Activated naive CD4-positive, alpha-beta T cell treated with anti-CD3 and anti-CD28 coated beads for 36 hours (primary cell): ENCODE measurements at regions of chr4 and their contacts with region 1.

Region 1: DNA sequence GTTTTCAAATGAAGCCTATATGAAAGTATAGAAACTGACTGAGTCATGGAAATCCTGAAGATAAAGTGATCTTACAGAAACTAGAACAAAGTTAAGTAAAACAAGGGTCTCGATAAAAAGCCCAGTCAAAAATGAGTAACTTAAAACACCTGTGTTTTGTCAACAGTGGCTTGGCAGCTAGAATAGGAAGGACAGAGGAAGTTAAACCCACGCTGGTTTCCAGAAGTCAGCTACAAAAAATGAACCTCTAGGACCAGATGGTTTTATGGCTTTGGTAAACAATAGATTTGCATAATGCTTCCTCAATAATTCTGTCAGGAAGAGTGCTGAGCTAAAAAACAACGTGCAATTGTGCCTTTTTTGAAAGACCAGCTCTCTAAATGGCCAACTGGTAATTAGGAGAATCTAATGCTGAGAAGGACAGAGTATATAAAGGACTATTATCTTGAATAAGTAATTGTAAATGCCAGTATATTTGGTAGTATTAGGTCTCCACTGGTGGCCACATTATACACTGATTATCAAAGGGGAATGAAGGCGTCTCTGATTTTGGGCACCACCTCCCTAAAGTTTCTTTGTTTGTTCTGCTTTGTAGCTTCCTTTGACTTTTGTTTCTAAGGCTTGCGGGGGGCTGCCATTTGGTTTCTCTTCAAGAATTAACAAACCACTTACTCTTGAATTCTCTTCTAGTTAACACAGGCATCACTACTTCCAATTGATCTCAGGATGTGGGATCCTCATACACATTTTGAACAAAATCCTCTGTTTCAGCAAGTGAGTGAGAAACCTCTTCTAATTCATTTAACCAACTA is 72.2 kb upstream of the PPP3CA start:
- DNase-seq: no peak
- H3K4me3 Mint-ChIP-seq: no peak overlapping the region
- H3K27ac Mint-ChIP-seq: no peak overlapping the region
- H3K4me1 Mint-ChIP-seq: peaks cover 36% of the 10 kb centered on the region
- H3K27me3 Mint-ChIP-seq: peaks cover 43% of the 10 kb centered on the region

Region 2: GRCh38 chr4:101103381-101104142 is 316.0 kb before region 1 on chr4:
- CTCF ChIA-PET with region 1: no interaction called
- intact Hi-C with region 1: no loop called
- DNase-seq: no peak
- H3K4me3 Mint-ChIP-seq: no peak overlapping the region
- H3K27ac Mint-ChIP-seq: no peak overlapping the region
- H3K4me1 Mint-ChIP-seq: peaks cover 21% of the 10 kb centered on the region
- H3K27me3 Mint-ChIP-seq: no peaks in the 10 kb centered on the region

Region 3: GRCh38 chr4:101205916-101206315 is 213.6 kb before region 1 on chr4:
- CTCF ChIA-PET with region 1: no interaction called
- intact Hi-C with region 1: loop called (anchors 2 kb)
- DNase-seq: peak; percentile 60
- H3K4me3 Mint-ChIP-seq: no peak overlapping the region
- H3K27ac Mint-ChIP-seq: no peak overlapping the region
- H3K4me1 Mint-ChIP-seq: peaks cover 24% of the 10 kb centered on the region
- H3K27me3 Mint-ChIP-seq: no peaks in the 10 kb centered on the region

Region 4: GRCh38 chr4:101334963-101335572 is 84.5 kb before region 1 on chr4:
- CTCF ChIA-PET with region 1: no interaction called
- intact Hi-C with region 1: no loop called
- DNase-seq: no peak
- H3K4me3 Mint-ChIP-seq: no peak overlapping the region
- H3K27ac Mint-ChIP-seq: no peak overlapping the region
- H3K4me1 Mint-ChIP-seq: peaks cover 22% of the 10 kb centered on the region
- H3K27me3 Mint-ChIP-seq: peaks cover 4% of the 10 kb centered on the region

Region 5: GRCh38 chr4:101458914-101459313 is 39.4 kb after region 1 on chr4:
- CTCF ChIA-PET with region 1: no interaction called
- intact Hi-C with region 1: no loop called
- DNase-seq: no peak
- H3K4me3 Mint-ChIP-seq: no peak overlapping the region
- H3K27ac Mint-ChIP-seq: no peak overlapping the region
- H3K4me1 Mint-ChIP-seq: no peaks in the 10 kb centered on the region
- H3K27me3 Mint-ChIP-seq: peaks cover 26% of the 10 kb centered on the region

Region 6: DNA sequence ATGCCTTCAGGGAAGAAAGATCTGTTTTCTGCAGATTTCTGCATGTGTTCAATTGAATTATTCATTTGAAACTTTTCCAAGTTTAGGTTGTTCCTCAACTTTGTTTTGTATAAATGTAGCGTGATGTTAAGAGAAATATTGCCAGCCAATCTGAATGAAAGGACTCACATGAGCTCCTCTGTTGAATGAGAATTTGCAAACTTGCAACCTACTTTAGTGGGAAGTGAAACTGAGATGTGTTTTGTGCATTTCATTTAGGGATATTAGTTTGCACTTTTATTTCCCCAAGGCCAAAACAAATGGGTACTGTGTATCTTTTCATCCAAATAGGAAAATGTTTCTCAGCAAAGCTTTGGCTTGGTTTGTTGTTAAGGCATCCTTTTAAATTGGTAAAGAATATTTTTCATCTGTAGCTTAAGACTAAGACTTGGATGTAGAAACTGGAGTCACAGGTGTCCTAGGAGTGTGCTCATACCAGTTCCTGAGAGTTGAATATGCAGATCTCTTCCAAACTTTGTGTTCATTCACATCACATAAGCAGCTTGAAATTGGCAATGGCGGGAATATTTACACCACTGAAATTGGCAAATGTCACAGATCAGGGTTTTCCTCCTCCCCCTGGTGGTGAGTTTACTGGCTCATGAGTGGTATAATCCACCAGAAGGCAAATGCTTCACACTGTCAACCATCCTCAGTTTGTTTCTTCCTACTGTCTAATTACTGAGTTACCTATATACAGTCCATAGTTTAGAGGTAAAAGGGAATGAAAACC is 177.4 kb after region 1 on chr4:
- CTCF ChIA-PET with region 1: no interaction called
- intact Hi-C with region 1: loop called (anchors 5 kb)
- DNase-seq: peak; percentile 33
- H3K4me3 Mint-ChIP-seq: no peak overlapping the region
- H3K27ac Mint-ChIP-seq: no peak overlapping the region
- H3K4me1 Mint-ChIP-seq: no peaks in the 10 kb centered on the region
- H3K27me3 Mint-ChIP-seq: peaks cover 1% of the 10 kb centered on the region

Region 7: DNA sequence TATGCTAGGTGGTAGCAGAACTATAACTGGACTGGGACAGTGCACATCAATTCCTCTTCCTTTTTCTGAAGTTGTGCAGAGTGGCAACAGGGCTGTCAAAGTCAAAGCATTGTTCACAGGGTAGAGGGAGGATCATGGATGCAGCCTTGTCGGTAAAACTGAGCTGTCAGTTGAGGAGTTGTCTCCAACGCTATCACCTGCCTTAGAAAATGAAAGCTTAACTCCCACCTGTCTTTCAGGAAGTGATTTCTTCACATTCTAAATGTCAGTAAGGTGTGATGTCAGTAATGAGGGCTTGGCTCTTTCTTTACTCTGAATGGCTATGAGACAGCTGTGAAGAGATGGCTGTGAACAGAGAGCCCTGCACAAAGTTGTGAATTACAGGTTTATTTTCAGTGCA is 304.6 kb after region 1 on chr4:
- CTCF ChIA-PET with region 1: no interaction called
- intact Hi-C with region 1: loop called (anchors 5 kb)
- DNase-seq: peak; percentile 18
- H3K4me3 Mint-ChIP-seq: no peak overlapping the region
- H3K27ac Mint-ChIP-seq: no peak overlapping the region
- H3K4me1 Mint-ChIP-seq: peaks cover 6% of the 10 kb centered on the region
- H3K27me3 Mint-ChIP-seq: no peaks in the 10 kb centered on the region

Region 8: GRCh38 chr4:102007959-102008425 is 588.5 kb after region 1 on chr4:
- CTCF ChIA-PET with region 1: no interaction called
- intact Hi-C with region 1: loop called (anchors 2 kb)
- DNase-seq: peak; percentile 26
- H3K4me3 Mint-ChIP-seq: no peak overlapping the region
- H3K27ac Mint-ChIP-seq: no peak overlapping the region
- H3K4me1 Mint-ChIP-seq: peaks cover 7% of the 10 kb centered on the region
- H3K27me3 Mint-ChIP-seq: no peaks in the 10 kb centered on the region

Region 9: GRCh38 chr4:102263011-102263787 is 843.7 kb after region 1 on chr4:
- CTCF ChIA-PET with region 1: no interaction called
- intact Hi-C with region 1: loop called (anchors 1 kb)
- DNase-seq: peak; percentile 22
- H3K4me3 Mint-ChIP-seq: no peak overlapping the region
- H3K27ac Mint-ChIP-seq: no peak overlapping the region
- H3K4me1 Mint-ChIP-seq: peaks cover 3% of the 10 kb centered on the region
- H3K27me3 Mint-ChIP-seq: no peaks in the 10 kb centered on the region